GM12878 (cell line): ENCODE measurements at regions of chr6 and their contacts with region 1.

Region 1: GRCh38 chr6:44058617-44059358 is 68.5 kb downstream of the MRPL14 start:
- DNase-seq: no peak
- ATAC-seq: peak; percentile 80
- H3K4me3 ChIP-seq: no peak overlapping the region
- H3K27ac ChIP-seq: no peak overlapping the region
- H3K4me1 ChIP-seq: peaks cover 24% of the 10 kb centered on the region
- H3K27me3 ChIP-seq: no peaks in the 10 kb centered on the region
- CTCF ChIP-seq: no peak
- EP300 ChIP-seq: no peak; a peak in 1 of 4 replicates
- POLR2A ChIP-seq: no peak
- RAD21 ChIP-seq: no peak

Region 2: GRCh38 chr6:44010411-44011349 is 48.1 kb before region 1 on chr6:
- CTCF ChIA-PET with region 1: interaction called, 5 read pairs
- POLR2A ChIA-PET with region 1: interaction called, 11 read pairs
- RAD21 ChIA-PET with region 1: interaction called, 5 read pairs
- SMC1A ChIA-PET with region 1: no interaction called
- in situ Hi-C with region 1: no loop called
- intact Hi-C with region 1: loop called (anchors 5 kb)
- DNase-seq: no peak
- ATAC-seq: peak; percentile 18
- H3K4me3 ChIP-seq: no peak overlapping the region
- H3K27ac ChIP-seq: no peak overlapping the region
- H3K4me1 ChIP-seq: no peaks in the 10 kb centered on the region
- H3K27me3 ChIP-seq: no peaks in the 10 kb centered on the region; a peak in 2 of 4 replicates
- CTCF ChIP-seq: no peak
- EP300 ChIP-seq: no peak
- POLR2A ChIP-seq: no peak
- RAD21 ChIP-seq: no peak

Region 3: DNA sequence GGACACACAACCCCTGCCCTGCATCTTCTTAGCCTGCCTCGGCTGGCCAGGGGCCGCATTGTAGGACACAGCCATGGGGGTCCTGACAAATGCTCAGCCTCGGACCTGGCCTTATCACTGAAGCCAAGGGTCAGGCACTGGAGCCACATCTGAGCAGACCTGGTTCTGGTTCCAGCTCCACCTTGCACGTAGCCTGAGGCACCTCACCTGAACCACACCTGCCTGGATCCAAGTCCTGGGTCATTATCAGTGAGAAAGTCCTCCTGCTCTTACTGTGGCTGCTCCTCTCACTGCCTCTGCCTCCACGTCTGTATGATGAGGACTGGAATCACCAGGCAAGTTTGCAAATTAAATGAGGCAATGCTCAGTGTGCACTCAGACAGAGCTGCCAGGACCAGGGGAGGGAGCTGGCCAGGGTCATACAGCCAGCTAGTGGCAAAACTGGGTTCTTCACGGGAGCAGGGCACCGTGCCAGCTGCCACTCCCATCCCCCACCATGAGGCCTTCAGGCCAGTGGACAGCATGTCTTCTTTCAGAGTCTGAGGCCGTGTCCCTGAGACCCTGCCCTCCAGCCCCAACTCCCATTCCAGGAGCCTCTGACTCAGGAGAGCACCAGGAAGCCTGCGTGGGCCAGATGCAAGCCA is 28.3 kb after region 1 on chr6:
- CTCF ChIA-PET with region 1: no interaction called
- POLR2A ChIA-PET with region 1: no interaction called
- RAD21 ChIA-PET with region 1: no interaction called
- SMC1A ChIA-PET with region 1: no interaction called
- in situ Hi-C with region 1: no loop called
- intact Hi-C with region 1: no loop called
- DNase-seq: no peak
- ATAC-seq: no peak
- H3K4me3 ChIP-seq: no peak overlapping the region
- H3K27ac ChIP-seq: no peak overlapping the region
- H3K4me1 ChIP-seq: no peaks in the 10 kb centered on the region
- H3K27me3 ChIP-seq: no peaks in the 10 kb centered on the region
- CTCF ChIP-seq: no peak
- EP300 ChIP-seq: no peak
- POLR2A ChIP-seq: no peak
- RAD21 ChIP-seq: no peak

Region 4: GRCh38 chr6:44151348-44152108 is 92.7 kb after region 1 on chr6:
- CTCF ChIA-PET with region 1: no interaction called
- POLR2A ChIA-PET with region 1: no interaction called
- RAD21 ChIA-PET with region 1: no interaction called
- SMC1A ChIA-PET with region 1: no interaction called
- in situ Hi-C with region 1: no loop called
- intact Hi-C with region 1: no loop called
- DNase-seq: no peak
- ATAC-seq: peak; percentile 98
- H3K4me3 ChIP-seq: no peak overlapping the region
- H3K27ac ChIP-seq: no peak overlapping the region
- H3K4me1 ChIP-seq: no peaks in the 10 kb centered on the region; the same call in 1 of the 2 replicates
- H3K27me3 ChIP-seq: no peaks in the 10 kb centered on the region
- CTCF ChIP-seq: peak; percentile 92 to 99 (median 99); a peak in 5 of 6 replicates
- EP300 ChIP-seq: no peak
- POLR2A ChIP-seq: no peak; the same call in 1 of the 2 replicates
- RAD21 ChIP-seq: peak; percentile 79